WTC11 (cell line): ENCODE measurements at regions of chr6 and their contacts with region 1.

Region 1: DNA sequence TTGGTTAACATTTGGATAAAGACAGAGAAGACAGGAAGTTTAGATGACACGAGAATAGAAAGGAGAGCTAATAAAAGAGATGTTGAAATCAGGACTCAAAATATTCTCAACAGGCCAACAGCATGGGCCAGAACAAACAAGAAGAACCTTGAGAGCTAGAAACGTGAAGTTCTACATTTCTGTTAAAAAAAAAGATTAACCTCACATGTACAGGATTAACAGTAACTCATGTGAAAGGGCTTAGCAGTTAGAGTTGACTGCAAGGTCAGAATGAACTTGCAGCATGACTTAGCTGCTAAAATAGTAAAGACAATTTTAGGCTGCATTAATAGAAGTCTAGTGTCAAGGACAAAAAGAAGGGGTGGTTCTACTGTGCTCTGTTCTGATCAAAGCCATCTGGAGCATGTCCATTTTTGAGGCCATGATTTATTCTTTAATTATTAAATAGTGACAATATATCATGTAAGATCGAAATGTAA is 331.1 kb upstream of the HSF2 start:
- DNase-seq: no peak
- ATAC-seq: no peak
- H3K4me3 Mint-ChIP-seq: no peak overlapping the region
- H3K27ac Mint-ChIP-seq: no peak overlapping the region
- H3K4me1 Mint-ChIP-seq: peaks cover 10% of the 10 kb centered on the region
- H3K27me3 Mint-ChIP-seq: no peaks in the 10 kb centered on the region
- CTCF ChIP-seq: no peak

Region 2: DNA sequence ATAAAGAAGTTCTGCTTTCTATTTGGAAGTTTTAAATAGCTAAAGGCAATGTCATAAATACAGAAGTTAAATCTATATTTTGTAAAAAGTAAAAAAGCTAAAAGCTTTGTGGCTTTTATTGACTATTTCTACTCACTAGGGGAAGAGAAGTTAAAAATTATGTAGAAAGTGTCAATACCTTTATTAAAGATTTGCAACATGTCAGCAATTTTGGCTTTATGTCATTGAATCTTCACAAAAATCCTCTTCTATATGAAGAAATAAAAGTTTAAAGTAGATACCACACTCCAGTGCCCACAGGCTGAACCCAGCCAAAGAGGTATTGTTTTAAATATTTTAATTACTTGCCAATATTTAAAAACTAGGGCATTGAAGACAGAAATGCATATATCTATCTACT is 170.5 kb after region 1 on chr6:
- CTCF ChIA-PET with region 1: no interaction called
- POLR2A ChIA-PET with region 1: no interaction called
- DNase-seq: no peak
- ATAC-seq: no peak
- H3K4me3 Mint-ChIP-seq: no peak overlapping the region
- H3K27ac Mint-ChIP-seq: no peak overlapping the region
- H3K4me1 Mint-ChIP-seq: no peaks in the 10 kb centered on the region
- H3K27me3 Mint-ChIP-seq: no peaks in the 10 kb centered on the region; the same call in 1 of the 2 replicates
- CTCF ChIP-seq: no peak

Region 3: DNA sequence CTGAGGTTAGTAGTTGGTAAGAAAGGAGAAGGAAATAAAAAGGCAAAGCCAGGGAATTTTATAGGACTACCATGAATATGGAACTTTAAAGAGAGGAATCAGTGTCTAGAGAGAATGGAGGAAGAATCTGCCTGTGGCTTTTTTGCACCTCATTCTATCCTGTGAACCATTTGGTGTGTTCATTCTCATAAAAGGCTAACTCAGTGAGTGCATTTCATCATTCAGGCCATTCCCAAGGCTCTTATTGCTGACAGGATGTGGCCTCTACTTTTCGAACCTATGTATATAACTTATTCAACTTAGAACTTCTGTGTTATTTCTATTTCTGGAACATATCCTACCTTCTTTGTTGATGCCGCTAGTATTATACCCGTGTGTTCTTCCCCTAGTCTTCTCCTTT is 358.3 kb after region 1 on chr6:
- CTCF ChIA-PET with region 1: no interaction called
- POLR2A ChIA-PET with region 1: interaction called, 12 read pairs
- DNase-seq: no peak
- ATAC-seq: no peak
- H3K4me3 Mint-ChIP-seq: no peak overlapping the region
- H3K27ac Mint-ChIP-seq: no peak overlapping the region
- H3K4me1 Mint-ChIP-seq: no peaks in the 10 kb centered on the region
- H3K27me3 Mint-ChIP-seq: no peaks in the 10 kb centered on the region
- CTCF ChIP-seq: no peak